Activated B cell treated with CpG ODN at 0.5 μM for 24 hours (primary cell): ENCODE measurements at regions of chr1 and their contacts with region 1.

Region 1: GRCh38 chr1:178310685-178311105 is 186.1 kb downstream of the CLEC20A start:
- DNase-seq: no peak
- ATAC-seq: peak; percentile 47
- H3K4me3 Mint-ChIP-seq: no peak overlapping the region
- H3K27ac Mint-ChIP-seq: no peak overlapping the region
- H3K4me1 Mint-ChIP-seq: no peaks in the 10 kb centered on the region
- H3K27me3 Mint-ChIP-seq: peaks cover 3% of the 10 kb centered on the region
- CTCF ChIP-seq: peak; percentile 74

Region 2: DNA sequence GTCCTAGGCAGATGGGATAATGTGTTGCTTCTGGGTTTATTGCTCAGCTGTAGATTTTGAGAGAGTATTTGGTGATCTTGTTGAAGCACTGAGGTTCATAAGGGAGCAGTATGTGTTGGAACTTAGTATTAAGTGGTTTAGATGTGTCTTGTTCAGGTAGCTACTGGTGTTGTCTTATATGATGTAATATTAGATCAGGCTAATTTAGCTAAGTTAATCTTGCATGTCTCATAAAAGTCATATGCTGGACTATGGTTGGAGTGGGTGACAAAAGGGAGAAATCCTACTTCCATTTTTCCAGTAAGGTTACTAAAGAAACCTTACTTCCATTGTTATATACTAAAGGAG is 10.4 kb before region 1 on chr1:
- CTCF ChIA-PET with region 1: interaction called, 20 read pairs
- POLR2A ChIA-PET with region 1: no interaction called
- intact Hi-C with region 1: no loop called
- DNase-seq: no peak
- ATAC-seq: no peak
- H3K4me3 Mint-ChIP-seq: no peak overlapping the region
- H3K27ac Mint-ChIP-seq: no peak overlapping the region
- H3K4me1 Mint-ChIP-seq: no peaks in the 10 kb centered on the region
- H3K27me3 Mint-ChIP-seq: peaks cover 6% of the 10 kb centered on the region
- CTCF ChIP-seq: no peak

Region 3: GRCh38 chr1:178501705-178502329 is 191.1 kb after region 1 on chr1:
- CTCF ChIA-PET with region 1: interaction called, 60 read pairs
- POLR2A ChIA-PET with region 1: no interaction called
- intact Hi-C with region 1: loop called (anchors 1 kb)
- DNase-seq: peak; percentile 56
- ATAC-seq: peak; percentile 70
- H3K4me3 Mint-ChIP-seq: no peak overlapping the region
- H3K27ac Mint-ChIP-seq: no peak overlapping the region
- H3K4me1 Mint-ChIP-seq: peaks cover 2% of the 10 kb centered on the region
- H3K27me3 Mint-ChIP-seq: no peaks in the 10 kb centered on the region
- CTCF ChIP-seq: no peak

Region 4: GRCh38 chr1:178532392-178532791 is 221.7 kb after region 1 on chr1:
- CTCF ChIA-PET with region 1: interaction called, 10 read pairs
- POLR2A ChIA-PET with region 1: no interaction called
- intact Hi-C with region 1: loop called (anchors 2 kb)
- DNase-seq: peak; percentile 77
- ATAC-seq: peak; percentile 93
- H3K4me3 Mint-ChIP-seq: no peak overlapping the region
- H3K27ac Mint-ChIP-seq: no peak overlapping the region
- H3K4me1 Mint-ChIP-seq: peaks cover 4% of the 10 kb centered on the region
- H3K27me3 Mint-ChIP-seq: no peaks in the 10 kb centered on the region
- CTCF ChIP-seq: peak; percentile 84

Region 5: GRCh38 chr1:179809506-179810366 is 1499.0 kb after region 1 on chr1:
- CTCF ChIA-PET with region 1: interaction called, 20 read pairs
- POLR2A ChIA-PET with region 1: no interaction called
- intact Hi-C with region 1: loop called (anchors 2 kb)
- DNase-seq: peak; percentile 47
- ATAC-seq: peak; percentile 78
- H3K4me3 Mint-ChIP-seq: no peak overlapping the region
- H3K27ac Mint-ChIP-seq: no peak overlapping the region
- H3K4me1 Mint-ChIP-seq: peaks cover 11% of the 10 kb centered on the region
- H3K27me3 Mint-ChIP-seq: peaks cover 23% of the 10 kb centered on the region
- CTCF ChIP-seq: no peak